ENCODE measurements at regions of chr17 and their contacts with region 1.

Region 1: DNA sequence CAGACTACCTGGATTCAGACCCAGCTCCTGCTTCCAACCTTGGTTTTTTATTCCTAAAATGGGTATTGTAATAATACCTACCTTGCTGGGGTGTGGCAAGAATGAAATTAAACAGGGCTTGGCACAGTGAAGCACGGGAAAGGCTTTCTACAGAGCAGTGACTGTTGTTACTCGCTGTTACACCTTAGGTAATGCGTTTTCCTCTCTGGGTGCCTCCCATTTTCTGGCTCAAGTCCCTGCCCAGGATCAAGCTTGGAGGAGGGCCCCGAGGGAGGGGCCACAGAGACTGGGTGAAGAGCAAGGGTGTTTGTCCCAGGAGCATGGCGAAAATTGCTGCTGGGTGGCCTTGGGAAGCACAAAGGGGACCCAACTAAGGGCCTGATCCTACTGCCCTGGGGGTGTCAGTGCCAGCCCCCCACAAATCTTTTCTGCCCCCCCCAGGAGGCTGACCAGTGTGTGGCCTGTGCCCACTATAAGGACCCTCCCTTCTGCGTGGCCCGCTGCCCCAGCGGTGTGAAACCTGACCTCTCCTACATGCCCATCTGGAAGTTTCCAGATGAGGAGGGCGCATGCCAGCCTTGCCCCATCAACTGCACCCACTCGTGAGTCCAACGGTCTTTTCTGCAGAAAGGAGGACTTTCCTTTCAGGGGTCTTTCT is 13.3 kb downstream of the MIEN1 start:
- DNase-seq: no peak
- ATAC-seq: 0 out of 6 replicates have a peak, but pooled peaks of 1 of the 2 experiments have one; percentile 10
- H3K4me3 ChIP-seq: no peak overlapping the region
- H3K27ac ChIP-seq: no peak overlapping the region
- H3K4me1 ChIP-seq: no peaks in the 10 kb centered on the region
- CTCF ChIP-seq: no peak
- EP300 ChIP-seq: no peak
- POLR2A ChIP-seq: no peak
- RAD21 ChIP-seq: no peak

Region 2: DNA sequence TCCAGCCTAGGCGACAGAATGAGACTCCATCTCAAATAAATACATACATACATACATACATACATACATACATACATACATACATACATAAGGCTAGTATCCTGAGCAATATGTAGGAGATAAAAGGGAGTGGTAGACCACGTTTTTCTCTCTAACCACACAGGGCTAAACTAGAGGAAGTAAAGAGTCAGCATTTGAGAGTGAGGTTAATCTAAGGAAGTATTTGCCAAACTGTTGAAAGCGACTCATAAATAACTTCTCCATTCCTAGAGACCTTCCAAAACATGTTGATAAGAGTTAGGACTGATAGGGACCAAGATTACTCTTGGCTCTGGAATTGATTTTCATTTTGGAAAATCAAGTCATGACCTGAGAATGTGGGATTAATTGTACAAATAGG is 178.1 kb before region 1 on chr17:
- CTCF ChIA-PET with region 1: no interaction called
- POLR2A ChIA-PET with region 1: no interaction called
- DNase-seq: no peak
- ATAC-seq: no peak; a peak in 1 of 6 replicates
- H3K4me3 ChIP-seq: no peak overlapping the region
- H3K27ac ChIP-seq: no peak overlapping the region
- H3K4me1 ChIP-seq: no peaks in the 10 kb centered on the region
- CTCF ChIP-seq: no peak
- EP300 ChIP-seq: no peak
- POLR2A ChIP-seq: no peak
- RAD21 ChIP-seq: no peak

Region 3: GRCh38 chr17:39647256-39647655 is 69.8 kb before region 1 on chr17:
- CTCF ChIA-PET with region 1: no interaction called
- POLR2A ChIA-PET with region 1: no interaction called
- DNase-seq: no peak
- ATAC-seq: no peak
- H3K4me3 ChIP-seq: no peak overlapping the region
- H3K27ac ChIP-seq: no peak overlapping the region
- H3K4me1 ChIP-seq: peaks cover 7% of the 10 kb centered on the region; the same call in 2 of the 3 replicates
- CTCF ChIP-seq: no peak
- EP300 ChIP-seq: no peak
- POLR2A ChIP-seq: no peak
- RAD21 ChIP-seq: no peak

Region 4: DNA sequence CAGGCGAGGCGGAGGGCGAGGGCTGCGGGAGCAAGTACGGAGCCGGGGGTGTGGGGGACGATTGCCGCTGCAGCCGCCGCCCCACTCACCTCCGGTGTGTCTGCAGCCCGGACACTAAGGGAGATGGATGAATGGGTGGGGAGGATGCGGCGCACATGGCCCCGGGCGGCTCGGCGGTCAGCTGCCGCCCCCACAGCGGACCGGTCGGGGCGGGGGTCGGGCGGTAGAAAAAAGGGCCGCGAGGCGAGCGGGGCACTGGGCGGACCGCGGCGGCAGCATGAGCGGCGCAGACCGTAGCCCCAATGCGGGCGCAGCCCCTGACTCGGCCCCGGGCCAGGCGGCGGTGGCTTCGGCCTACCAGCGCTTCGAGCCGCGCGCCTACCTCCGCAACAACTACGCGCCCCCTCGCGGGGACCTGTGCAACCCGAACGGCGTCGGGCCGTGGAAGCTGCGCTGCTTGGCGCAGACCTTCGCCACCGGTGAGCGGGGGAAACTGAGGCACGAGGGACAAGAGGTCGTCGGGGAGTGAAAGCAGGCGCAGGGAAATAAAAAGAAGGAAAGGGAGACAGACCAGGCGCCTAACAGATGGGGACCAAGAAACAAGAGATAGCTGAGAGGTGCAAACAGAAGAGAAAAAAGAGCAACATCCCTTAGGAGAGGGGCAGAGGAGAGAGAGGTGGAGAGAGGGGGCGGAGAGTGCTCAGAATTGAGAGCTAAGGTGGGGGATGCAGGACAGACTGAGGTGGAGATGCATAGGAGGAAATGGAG is 48.6 kb before region 1 on chr17 and contains the start of gene PNMT:
- CTCF ChIA-PET with region 1: interaction called, 10 read pairs
- POLR2A ChIA-PET with region 1: no interaction called
- DNase-seq: peak; percentile 78 to 84
- ATAC-seq: peak; percentile 30 to 52; a peak in 5 of 6 replicates
- H3K4me3 ChIP-seq: peak within 1 kb of the TSS; percentile 38
- H3K27ac ChIP-seq: peak within 1 kb of the TSS; percentile 74 to 89; a peak in 5 of 6 replicates
- H3K4me1 ChIP-seq: peaks cover 48% of the 10 kb centered on the region
- CTCF ChIP-seq: peak; percentile 68
- EP300 ChIP-seq: no peak
- POLR2A ChIP-seq: no peak
- RAD21 ChIP-seq: peak; percentile 43 to 49
- polyA plus RNA-seq, gene PNMT: not detected in 2 replicates

Region 5: DNA sequence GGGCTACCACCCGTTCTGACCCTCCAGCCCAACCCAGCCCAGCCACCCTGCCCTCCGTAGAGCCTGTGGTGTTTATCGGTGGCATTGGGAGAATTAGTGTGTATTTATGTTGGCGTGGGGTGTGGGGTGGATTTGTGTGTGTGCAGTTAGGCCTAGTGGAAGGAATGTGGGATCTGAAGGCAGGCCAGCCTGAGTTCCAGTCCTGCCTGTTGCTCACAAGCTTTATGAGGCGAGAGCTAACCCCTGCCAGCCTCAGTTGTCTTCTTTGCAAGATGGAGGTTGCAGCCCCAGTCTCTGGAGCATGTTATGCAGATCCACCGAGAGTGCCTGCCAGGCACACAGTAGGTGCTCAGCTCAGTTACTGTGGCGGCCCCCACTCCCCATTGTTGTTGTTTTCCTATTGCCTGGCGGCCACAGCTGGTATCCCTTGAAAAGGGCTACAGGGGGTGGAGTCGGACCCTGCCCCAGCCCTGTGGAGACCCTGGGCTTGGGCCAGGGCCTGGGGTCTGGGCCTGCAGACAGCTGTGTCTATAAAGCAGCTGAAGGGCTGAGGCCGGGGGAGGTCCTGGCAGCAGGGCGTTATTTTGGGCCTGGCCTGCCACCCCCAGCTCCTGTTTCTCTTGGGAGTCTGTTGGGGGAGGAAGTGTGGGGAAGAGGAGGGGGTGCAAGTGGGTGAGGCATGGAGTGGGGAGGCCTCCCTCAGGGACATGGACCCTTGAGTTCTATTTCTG is 12.0 kb before region 1 on chr17:
- CTCF ChIA-PET with region 1: interaction called, 13 read pairs
- POLR2A ChIA-PET with region 1: interaction called, 4 read pairs
- DNase-seq: peak; percentile 38 to 40
- ATAC-seq: no peak
- H3K4me3 ChIP-seq: no peak overlapping the region
- H3K27ac ChIP-seq: peak overlapping the region in 1 of 2 experiments; percentile 24; a peak in 1 of 6 replicates
- H3K4me1 ChIP-seq: peaks cover 59% of the 10 kb centered on the region
- CTCF ChIP-seq: no peak
- EP300 ChIP-seq: no peak
- POLR2A ChIP-seq: no peak
- RAD21 ChIP-seq: no peak

Region 6: DNA sequence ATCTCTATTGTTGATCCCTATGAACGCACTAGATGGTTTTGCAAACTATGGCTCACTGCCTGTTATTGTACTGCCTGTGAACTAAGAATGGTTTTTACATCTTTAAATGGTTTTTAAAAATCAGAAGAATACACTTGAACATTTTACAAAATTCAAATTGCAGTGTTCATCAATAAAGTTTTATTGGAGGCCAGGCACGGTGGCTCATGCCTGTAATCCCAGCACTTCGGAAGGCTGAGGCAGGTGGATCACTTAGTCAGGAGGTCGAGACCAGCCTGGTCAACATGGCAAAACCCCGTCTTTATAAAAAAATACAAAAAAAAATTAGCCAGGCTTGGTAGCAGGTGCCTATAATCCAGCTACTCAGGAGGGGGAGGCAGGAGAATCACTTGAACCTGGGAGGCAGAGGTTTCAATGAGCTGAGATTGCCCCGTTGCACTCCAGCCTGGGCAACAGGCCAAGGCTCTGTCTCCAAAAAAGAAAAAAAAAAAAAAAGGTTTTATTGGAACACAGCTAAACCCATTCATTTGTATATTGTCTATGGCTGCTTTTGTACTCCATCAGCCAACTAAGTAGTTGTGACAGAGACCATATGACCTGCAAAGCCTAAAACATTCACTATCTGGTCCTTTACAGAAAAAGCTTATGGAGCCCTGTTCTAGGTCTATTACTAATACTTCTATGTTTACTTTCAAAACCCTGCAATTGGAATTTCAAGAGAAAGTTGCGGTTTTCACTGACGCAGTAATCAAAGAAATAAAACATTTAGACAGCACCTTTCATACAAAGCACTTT is 128.2 kb after region 1 on chr17:
- CTCF ChIA-PET with region 1: no interaction called
- POLR2A ChIA-PET with region 1: no interaction called
- DNase-seq: no peak
- ATAC-seq: no peak
- H3K4me3 ChIP-seq: no peak overlapping the region
- H3K27ac ChIP-seq: no peak overlapping the region
- H3K4me1 ChIP-seq: no peaks in the 10 kb centered on the region
- CTCF ChIP-seq: no peak
- EP300 ChIP-seq: no peak
- POLR2A ChIP-seq: no peak
- RAD21 ChIP-seq: no peak